ENCODE measurements at regions of chr1 and their contacts with region 1.

Region 1: DNA sequence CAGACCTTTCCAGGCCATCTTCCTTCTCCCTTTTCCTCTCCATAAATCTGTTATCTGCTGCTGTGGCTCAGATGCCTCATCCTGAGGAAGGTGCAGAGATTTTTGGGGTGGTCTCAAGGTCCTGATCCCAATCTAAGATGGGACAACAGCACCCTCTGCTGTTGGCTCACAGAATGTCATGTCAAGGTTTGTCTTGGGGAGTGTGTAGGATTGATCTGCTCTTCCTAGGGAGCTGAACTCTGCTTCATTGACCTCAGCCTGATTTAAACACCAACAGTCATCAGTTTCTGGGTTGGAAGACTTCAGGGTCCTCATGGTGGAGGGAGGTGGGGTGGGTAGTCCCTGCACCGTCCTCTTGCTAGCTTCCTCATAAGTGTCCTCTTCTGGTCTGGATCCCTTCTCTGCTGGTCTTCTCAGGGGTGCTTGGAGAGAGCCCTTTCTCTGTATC is 62.8 kb upstream of the LAX1 start:
- DNase-seq: peak; percentile 55
- CTCF ChIP-seq: peak; percentile 59

Region 2: DNA sequence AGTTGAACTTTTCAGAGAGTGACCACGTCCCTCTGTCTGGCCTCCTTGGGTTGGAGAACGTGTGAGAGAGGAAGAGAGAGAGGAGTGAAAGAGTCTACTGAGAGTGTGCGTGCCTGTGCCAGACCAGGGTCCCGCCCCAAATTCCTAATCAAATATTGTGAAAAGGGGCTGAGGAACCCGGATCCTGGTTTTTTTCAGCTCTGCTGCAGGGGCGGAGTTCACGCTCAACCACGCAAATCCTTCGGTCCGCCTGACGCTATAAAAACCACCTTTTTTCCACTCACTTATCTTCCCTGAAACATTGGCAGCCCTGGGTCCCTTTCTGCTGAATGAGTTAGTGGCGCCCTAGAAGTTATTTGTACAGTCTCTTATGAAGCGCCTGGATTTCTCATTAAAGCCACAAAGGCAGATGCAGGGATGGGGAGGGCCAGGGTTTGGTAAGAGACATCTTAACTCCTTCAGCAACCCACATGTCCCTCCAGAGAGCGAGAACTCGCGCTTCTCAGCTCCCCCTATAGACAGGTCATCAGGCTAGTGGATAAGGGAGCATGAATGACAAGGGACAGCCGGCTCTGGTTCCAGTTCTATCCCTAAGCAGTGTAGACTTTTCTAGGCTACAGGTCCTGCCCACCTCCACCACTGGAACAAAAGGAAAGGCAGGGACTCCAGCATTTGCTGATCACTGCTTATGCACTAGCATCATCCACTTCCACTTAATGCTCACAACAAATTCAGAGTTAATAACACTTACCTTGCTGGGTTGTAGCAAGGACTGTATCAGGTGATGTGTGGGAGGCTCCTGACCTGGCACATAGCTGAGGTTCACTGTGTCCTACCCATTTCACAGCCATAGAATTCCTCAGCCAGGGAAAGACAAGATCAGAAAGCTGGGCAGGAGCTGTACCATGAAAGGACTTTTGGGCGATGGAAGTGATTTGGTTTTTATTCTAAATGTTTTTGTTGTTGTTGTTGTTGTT is 350.8 kb before region 1 on chr1 and contains the start of gene FMOD:
- in situ Hi-C with region 1: loop called (anchors 25 kb)
- DNase-seq: no peak
- CTCF ChIP-seq: no peak

Region 3: GRCh38 chr1:203504397-203505250 is 197.5 kb before region 1 on chr1:
- in situ Hi-C with region 1: loop called (anchors 5 kb)
- DNase-seq: peak; percentile 85
- CTCF ChIP-seq: peak; percentile 78

Region 4: DNA sequence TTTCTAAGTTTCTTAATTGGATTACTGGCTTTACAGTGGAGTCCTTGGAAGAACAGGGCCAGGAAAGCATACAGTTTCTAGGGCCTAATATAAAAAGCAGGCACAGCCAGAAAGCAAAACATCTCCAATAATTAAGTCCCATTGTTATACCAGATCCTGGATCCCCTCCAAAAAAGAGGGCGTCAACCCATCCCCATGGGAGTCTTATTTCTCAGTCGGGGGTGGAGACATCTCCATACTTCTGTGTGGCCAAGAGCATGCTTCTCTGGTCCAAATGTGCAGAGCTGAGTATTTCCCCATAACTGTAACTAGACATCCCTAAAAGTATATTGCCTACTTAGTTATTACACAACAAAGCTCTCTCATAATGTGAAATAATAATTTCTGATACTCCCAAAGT is 266.6 kb after region 1 on chr1:
- in situ Hi-C with region 1: no loop called
- DNase-seq: no peak
- CTCF ChIP-seq: no peak

Region 5: DNA sequence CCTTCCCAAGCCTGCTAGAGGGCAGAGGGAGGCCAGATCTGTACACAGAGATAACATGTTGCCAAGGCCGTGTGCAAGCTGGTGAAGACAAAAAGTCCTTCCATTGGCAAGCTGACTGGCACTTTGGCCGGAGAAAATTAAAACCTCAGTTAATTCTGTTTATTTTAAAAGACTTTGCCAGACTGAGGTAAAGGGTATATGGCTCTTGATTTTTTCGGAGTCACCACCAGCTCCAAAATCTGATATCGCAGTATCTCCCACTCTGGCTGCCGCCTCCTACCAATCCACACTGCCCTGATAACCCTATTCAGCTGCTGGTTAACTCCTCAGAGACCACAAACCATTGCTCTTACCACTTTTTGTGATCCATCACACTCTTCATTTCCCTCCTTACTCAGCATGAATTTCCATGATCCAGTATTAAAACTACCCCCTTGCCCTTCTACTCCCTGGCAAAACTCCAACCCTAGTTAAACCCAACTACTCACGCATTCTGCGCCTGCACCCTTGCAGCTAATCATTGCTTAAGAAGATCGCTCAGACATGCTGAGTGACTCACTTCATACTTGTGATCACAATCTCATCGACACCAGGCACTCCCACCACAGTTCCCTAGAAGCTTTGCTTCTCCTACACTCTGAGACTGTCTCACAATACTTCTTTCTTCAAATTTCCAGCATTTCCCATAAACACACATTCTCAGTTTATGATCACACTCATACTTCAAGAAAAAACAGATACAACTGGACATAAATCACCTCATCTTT is 715.3 kb after region 1 on chr1:
- in situ Hi-C with region 1: no loop called
- DNase-seq: no peak
- CTCF ChIP-seq: no peak